Psoas muscle (tissue), 8 donors: ENCODE measurements at regions of chr4 and their contacts with region 1.

Region 1: GRCh38 chr4:119050527-119051090 is 85.0 kb upstream of the MYOZ2 start:
- DNase-seq: no peak
- ATAC-seq: no peak
- H3K4me3 ChIP-seq: no peak overlapping the region
- H3K27ac ChIP-seq: no peak overlapping the region
- H3K4me1 ChIP-seq: peaks cover 26% of the 10 kb centered on the region
- H3K27me3 ChIP-seq: no peaks in the 10 kb centered on the region
- CTCF ChIP-seq: no peak

Region 2: GRCh38 chr4:119087121-119087520 is 36.5 kb after region 1 on chr4:
- intact Hi-C with region 1: loop called (anchors 2 to 5 kb)
- DNase-seq: no peak
- ATAC-seq: no peak
- H3K4me3 ChIP-seq: no peak overlapping the region
- H3K27ac ChIP-seq: no peak overlapping the region
- H3K4me1 ChIP-seq: peaks cover 6% of the 10 kb centered on the region
- H3K27me3 ChIP-seq: no peaks in the 10 kb centered on the region
- CTCF ChIP-seq: peak; percentile 30

Region 3: DNA sequence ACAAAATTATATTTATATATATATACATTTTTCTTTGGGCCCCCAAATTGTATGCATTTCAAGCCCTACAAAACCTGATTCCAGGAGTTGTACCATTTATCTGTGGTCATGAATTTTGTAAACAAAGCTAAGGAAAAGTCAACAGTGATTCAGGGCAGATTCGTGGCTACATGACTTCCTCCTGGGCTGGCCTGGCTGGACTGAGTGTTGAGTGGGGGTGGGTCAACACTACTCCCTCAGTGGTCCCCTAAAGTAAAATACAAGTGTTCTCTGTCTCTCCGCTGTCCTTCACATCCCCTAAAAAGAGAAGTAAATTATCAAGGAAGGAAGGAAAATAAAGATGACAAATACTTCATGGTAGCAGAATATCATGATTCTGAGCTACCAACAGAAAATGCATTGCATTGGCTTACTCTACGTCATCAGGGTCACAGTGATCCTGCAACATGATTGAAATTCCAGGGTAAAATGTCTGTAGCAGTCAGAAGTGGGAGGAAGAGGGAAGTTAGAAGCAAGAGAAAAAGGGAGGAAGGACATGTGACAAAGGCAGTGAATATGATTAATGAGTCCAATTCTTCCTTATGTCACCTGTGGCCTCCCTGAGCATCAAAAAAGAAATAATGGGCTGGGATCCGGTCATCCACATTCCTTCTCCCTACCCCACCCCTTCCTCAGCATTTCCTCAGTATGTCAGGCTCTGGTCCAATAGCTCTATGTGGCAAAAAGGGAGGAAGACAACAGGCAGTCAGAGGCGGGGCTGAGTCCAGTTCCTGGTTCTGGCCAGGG is 42.6 kb after region 1 on chr4:
- intact Hi-C with region 1: loop called (anchors 1 to 5 kb)
- DNase-seq: no peak
- ATAC-seq: no peak
- H3K4me3 ChIP-seq: no peak overlapping the region
- H3K27ac ChIP-seq: no peak overlapping the region
- H3K4me1 ChIP-seq: peaks cover 9% of the 10 kb centered on the region
- H3K27me3 ChIP-seq: no peaks in the 10 kb centered on the region
- CTCF ChIP-seq: no peak

Region 4: DNA sequence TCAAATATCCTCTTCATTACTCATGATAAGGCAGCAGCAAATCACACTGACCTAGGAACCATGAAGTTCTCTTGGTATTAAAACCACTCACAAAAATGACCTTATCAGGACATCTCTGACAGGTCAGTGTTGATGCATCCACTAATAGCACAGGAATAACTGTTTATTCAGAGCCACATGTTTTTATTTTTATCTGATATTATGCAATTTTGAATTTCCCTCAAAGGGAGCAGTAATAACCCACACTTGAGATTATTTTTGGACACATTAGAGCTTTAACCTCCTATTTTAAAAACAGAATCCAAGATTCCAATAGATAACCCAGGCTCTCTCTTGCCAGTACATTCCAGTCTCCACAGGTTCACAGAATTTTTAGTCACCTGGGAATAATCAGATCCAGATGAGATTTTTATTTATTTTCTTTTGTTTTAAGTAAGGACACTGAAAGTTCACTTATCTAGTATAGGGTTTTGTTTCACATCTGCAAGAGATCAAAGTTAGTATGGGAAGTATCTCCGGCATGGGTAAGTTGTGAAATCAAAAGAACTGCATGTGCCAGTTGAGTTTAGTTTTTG is 48.7 kb after region 1 on chr4:
- intact Hi-C with region 1: loop called (anchors 1 to 5 kb)
- DNase-seq: no peak
- ATAC-seq: peak; percentile 26 to 77 (median 58)
- H3K4me3 ChIP-seq: no peak overlapping the region
- H3K27ac ChIP-seq: peak overlapping the region; percentile 57
- H3K4me1 ChIP-seq: peaks cover 33% of the 10 kb centered on the region
- H3K27me3 ChIP-seq: no peaks in the 10 kb centered on the region
- CTCF ChIP-seq: no peak